ENCODE measurements at regions of chrX and their contacts with region 1.

Region 1: GRCh38 chrX:54808605-54809483 is 1.3 kb downstream of the MAGED2 start:
- DNase-seq: peak; percentile 92
- ATAC-seq: peak; percentile 92
- H3K4me3 ChIP-seq: peak overlapping the region in 4 of 5 experiments; percentile 67 to 81 (median 76)
- H3K4me3 Mint-ChIP-seq: peak overlapping the region; percentile 96
- H3K27ac ChIP-seq: peak overlapping the region; percentile 64 to 82
- H3K27ac Mint-ChIP-seq: peak overlapping the region; percentile 93
- H3K4me1 ChIP-seq: peaks cover 8 to 16% of the 10 kb centered on the region in 2 donors
- H3K4me1 Mint-ChIP-seq: peaks cover 5% of the 10 kb centered on the region
- H3K27me3 ChIP-seq: no peaks in the 10 kb centered on the region
- H3K27me3 Mint-ChIP-seq: no peaks in the 10 kb centered on the region
- CTCF ChIP-seq: no peak

Region 2: GRCh38 chrX:53081925-53082772 is 1726.7 kb before region 1 on chrX and contains the start of gene TSPYL2:
- CTCF ChIA-PET with region 1: no interaction called
- POLR2A ChIA-PET with region 1: no interaction called
- intact Hi-C with region 1: loop called (anchors 5 kb)
- DNase-seq: peak; percentile 95
- ATAC-seq: peak; percentile 88
- H3K4me3 ChIP-seq: peak within 1 kb of the TSS; percentile 61 to 69 (median 65)
- H3K4me3 Mint-ChIP-seq: peak within 1 kb of the TSS; percentile 90
- H3K27ac ChIP-seq: peak within 1 kb of the TSS; percentile 85
- H3K27ac Mint-ChIP-seq: peak within 1 kb of the TSS; percentile 96
- H3K4me1 ChIP-seq: peaks cover 9 to 17% of the 10 kb centered on the region in 2 donors
- H3K4me1 Mint-ChIP-seq: peaks cover 31% of the 10 kb centered on the region
- H3K27me3 ChIP-seq: no peaks in the 10 kb centered on the region
- H3K27me3 Mint-ChIP-seq: no peaks in the 10 kb centered on the region
- CTCF ChIP-seq: no peak
- total RNA-seq, gene TSPYL2: 112 and 126 TPM in 2 replicates

Region 3: GRCh38 chrX:54529552-54530357 is 279.1 kb before region 1 on chrX and contains the start of gene GNL3L:
- CTCF ChIA-PET with region 1: no interaction called
- POLR2A ChIA-PET with region 1: interaction called, 3 read pairs
- intact Hi-C with region 1: loop called (anchors 2 kb)
- DNase-seq: peak; percentile 89
- ATAC-seq: peak; percentile 86
- H3K4me3 ChIP-seq: peak within 1 kb of the TSS; percentile 64 to 93 (median 75)
- H3K4me3 Mint-ChIP-seq: peak within 1 kb of the TSS; percentile 93
- H3K27ac ChIP-seq: peak within 1 kb of the TSS; percentile 89 to 91
- H3K27ac Mint-ChIP-seq: peak within 1 kb of the TSS; percentile 97
- H3K4me1 ChIP-seq: peaks cover 13 to 31% of the 10 kb centered on the region in 2 donors
- H3K4me1 Mint-ChIP-seq: peaks cover 34% of the 10 kb centered on the region
- H3K27me3 ChIP-seq: no peaks in the 10 kb centered on the region
- H3K27me3 Mint-ChIP-seq: no peaks in the 10 kb centered on the region
- CTCF ChIP-seq: no peak
- total RNA-seq, gene GNL3L: 47.2 and 52.4 TPM in 2 replicates

Region 4: GRCh38 chrX:54978451-54978850 is 169.6 kb after region 1 on chrX:
- CTCF ChIA-PET with region 1: no interaction called
- POLR2A ChIA-PET with region 1: no interaction called
- intact Hi-C with region 1: no loop called
- DNase-seq: no peak
- ATAC-seq: no peak
- H3K4me3 ChIP-seq: no peak overlapping the region
- H3K4me3 Mint-ChIP-seq: no peak overlapping the region
- H3K27ac ChIP-seq: no peak overlapping the region
- H3K27ac Mint-ChIP-seq: no peak overlapping the region
- H3K4me1 ChIP-seq: no peaks in the 10 kb centered on the region
- H3K4me1 Mint-ChIP-seq: no peaks in the 10 kb centered on the region
- H3K27me3 ChIP-seq: no peaks in the 10 kb centered on the region
- H3K27me3 Mint-ChIP-seq: no peaks in the 10 kb centered on the region
- CTCF ChIP-seq: no peak

Region 5: DNA sequence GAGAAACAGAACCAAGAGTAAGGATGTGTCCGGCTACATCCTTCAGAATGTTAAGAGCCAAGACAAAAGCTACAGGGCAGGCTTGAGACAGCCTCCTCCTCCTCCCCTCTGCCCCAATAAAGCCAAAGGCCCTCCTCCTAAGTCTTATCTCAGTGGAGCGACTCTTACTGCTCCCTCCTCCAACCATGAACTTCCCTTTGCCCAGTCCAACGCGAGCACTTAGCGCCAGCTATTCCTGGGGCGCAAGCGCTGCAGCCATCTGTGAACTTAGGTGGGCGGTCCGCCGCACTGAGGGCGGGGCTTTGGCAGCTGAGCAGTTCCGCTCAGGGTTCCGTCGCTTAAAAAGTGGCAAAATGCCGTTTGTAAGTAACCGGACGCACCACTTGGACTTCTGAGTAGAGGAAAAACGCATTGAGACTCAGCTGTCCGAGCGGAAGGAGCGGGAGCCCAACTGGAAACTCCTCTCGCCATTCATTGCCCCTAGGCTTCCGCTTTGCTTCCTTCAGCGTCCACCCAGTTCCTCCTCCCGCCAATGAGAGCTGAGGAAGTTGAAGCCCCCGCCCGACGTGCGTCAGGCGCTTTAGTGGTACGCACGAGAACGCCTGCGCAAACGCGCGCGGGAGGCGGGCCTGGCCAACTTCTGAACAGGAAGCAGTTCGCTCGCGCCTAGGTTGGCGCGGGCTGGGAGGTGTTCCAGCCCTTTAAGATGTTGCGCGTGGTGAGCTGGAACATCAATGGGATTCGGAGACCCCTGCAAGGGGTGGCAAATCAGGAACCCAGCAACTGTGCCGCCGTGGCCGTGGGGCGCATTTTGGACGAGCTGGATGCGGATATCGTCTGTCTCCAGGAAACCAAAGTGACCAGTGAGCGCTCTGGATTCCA is 191.1 kb after region 1 on chrX and contains the start of gene APEX2:
- CTCF ChIA-PET with region 1: no interaction called
- POLR2A ChIA-PET with region 1: interaction called, 3 read pairs
- intact Hi-C with region 1: loop called (anchors 1 kb)
- DNase-seq: peak; percentile 91
- ATAC-seq: peak; percentile 94
- H3K4me3 ChIP-seq: peak within 1 kb of the TSS; percentile 71 to 75 (median 73)
- H3K4me3 Mint-ChIP-seq: peak within 1 kb of the TSS; percentile 97
- H3K27ac ChIP-seq: peak within 1 kb of the TSS; percentile 85 to 86
- H3K27ac Mint-ChIP-seq: peak within 1 kb of the TSS; percentile 95
- H3K4me1 ChIP-seq: peaks cover 7 to 20% of the 10 kb centered on the region in 2 donors
- H3K4me1 Mint-ChIP-seq: peaks cover 27% of the 10 kb centered on the region
- H3K27me3 ChIP-seq: no peaks in the 10 kb centered on the region
- H3K27me3 Mint-ChIP-seq: no peaks in the 10 kb centered on the region
- CTCF ChIP-seq: no peak
- total RNA-seq, gene APEX2: 13.1 and 19.6 TPM in 2 replicates

Region 6: DNA sequence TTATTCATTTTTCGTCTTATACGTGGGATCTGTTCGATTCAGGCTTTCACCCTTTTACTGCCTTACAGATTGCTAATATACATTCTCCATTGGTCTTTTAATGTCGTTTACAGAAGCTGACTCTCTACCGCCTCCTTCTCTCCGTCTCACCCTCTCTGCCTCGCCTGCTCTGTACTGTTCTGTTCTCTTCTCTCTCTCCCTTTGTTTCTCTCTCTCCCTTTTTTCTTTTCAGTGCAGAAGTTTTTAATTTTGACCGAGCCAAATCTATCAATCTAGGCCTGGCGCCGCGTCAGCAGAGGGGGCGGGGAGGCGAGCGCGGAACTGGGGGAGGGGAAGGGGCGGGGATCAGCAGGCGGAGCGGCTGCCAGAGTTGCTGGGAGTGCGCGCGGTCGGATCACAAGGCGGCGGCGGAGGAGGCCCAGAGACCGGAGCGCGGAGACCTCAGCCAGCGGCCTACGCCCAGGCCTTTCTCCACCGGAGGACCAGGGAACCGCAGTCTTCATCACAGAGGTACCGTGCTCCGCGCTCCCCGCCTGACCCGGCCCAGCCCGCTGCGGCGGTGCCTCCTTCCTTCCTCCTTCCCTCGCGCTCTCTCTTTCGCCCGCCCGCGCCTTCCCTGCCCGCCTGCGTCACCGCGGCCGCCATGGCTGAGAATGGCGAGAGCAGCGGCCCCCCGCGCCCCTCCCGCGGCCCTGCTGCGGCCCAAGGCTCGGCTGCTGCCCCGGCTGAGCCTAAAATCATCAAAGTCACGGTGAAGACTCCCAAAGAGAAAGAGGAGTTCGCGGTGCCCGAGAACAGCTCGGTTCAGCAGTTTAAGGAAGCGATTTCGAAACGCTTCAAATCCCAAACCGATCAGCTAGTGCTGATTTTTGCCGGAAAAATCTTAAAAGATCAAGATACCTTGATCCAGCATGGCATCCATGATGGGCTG is 1754.7 kb after region 1 on chrX and contains the start of gene UBQLN2:
- CTCF ChIA-PET with region 1: no interaction called
- POLR2A ChIA-PET with region 1: no interaction called
- intact Hi-C with region 1: loop called (anchors 5 kb)
- DNase-seq: peak; percentile 82
- ATAC-seq: peak; percentile 85
- H3K4me3 ChIP-seq: peak within 1 kb of the TSS; percentile 65 to 85 (median 75)
- H3K4me3 Mint-ChIP-seq: peak within 1 kb of the TSS; percentile 93
- H3K27ac ChIP-seq: peak within 1 kb of the TSS; percentile 88 to 92
- H3K27ac Mint-ChIP-seq: peak within 1 kb of the TSS; percentile 97
- H3K4me1 ChIP-seq: peaks cover 11 to 15% of the 10 kb centered on the region in 2 donors
- H3K4me1 Mint-ChIP-seq: peaks cover 25% of the 10 kb centered on the region
- H3K27me3 ChIP-seq: no peaks in the 10 kb centered on the region
- H3K27me3 Mint-ChIP-seq: no peaks in the 10 kb centered on the region
- CTCF ChIP-seq: no peak
- total RNA-seq, gene UBQLN2: 33.8 and 35.3 TPM in 2 replicates